Colonic mucosa (tissue), 4 donors: ENCODE measurements at regions of chr3 and their contacts with region 1.

Region 1: DNA sequence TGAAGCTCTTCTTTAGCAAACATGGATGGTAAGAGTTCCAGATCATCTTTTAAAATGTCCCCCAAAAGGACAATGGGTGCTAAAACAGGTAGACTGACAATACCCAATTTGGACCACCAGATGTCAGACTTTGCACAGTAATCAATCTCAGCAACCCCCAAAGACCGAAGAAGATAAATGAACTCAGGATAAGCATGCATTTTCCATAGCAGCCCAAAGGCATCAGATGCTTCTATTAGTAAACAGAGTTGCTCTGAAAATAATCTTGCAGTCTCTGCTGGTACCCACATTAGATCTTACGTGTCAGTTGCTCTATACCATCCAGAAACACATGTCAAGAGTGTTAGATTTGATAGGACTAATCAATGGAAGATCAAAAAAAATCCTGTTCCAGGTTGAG is 20.6 kb downstream of the MYH15 start:
- DNase-seq: peak; percentile 35
- H3K4me3 ChIP-seq: no peak overlapping the region
- H3K27ac ChIP-seq: no peak overlapping the region
- H3K4me1 ChIP-seq: no peaks in the 10 kb centered on the region
- H3K27me3 ChIP-seq: no peaks in the 10 kb centered on the region
- CTCF ChIP-seq: peak; percentile 56

Region 2: GRCh38 chr3:107938143-107938542 is 551.6 kb before region 1 on chr3:
- intact Hi-C with region 1: loop called (anchors 10 kb)
- DNase-seq: peak; percentile 32
- H3K4me3 ChIP-seq: no peak overlapping the region
- H3K27ac ChIP-seq: no peak overlapping the region
- H3K4me1 ChIP-seq: no peaks in the 10 kb centered on the region
- H3K27me3 ChIP-seq: no peaks in the 10 kb centered on the region
- CTCF ChIP-seq: peak; percentile 21

Region 3: DNA sequence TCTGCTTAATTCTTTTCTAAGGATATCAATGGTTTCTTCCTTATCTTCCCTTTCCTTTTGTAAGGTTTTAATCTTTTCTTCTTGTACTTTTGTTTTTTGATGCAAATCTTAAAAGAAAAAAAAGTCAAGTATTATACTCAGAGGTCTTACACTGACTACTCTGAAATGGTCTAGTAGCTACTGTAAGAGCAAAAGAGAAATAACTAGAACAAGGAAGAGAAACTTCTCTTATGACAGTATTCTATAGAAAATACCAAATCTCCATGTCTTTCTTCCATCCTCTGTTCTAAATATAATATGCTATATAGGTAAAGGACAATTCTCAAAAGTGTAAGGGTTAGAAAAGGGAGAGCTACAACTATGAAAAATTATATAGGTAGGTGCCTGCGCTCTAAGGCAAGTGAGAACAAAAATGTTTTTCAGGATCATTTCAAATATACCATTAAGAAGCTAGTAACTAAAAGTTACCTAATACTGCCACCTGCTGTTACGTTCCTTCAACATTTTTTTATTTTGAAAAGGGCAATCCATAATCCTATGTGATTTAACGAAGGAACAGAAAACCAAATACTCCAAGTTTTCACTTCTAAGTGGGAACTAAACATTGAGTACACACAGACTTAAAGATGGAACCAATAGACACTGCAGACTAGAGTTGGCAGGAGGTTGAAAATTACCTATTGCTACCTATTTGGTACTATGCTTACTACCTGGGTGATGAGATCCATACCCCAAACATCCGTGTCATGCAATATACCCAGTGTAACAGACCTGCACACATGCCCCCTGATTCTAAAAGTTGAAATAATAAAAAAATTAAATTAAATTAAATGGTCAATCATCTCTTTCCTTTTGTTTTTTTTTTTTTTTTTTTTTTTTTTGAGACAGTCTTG is 62.7 kb after region 1 on chr3:
- intact Hi-C with region 1: loop called (anchors 5 kb)
- DNase-seq: no peak
- H3K4me3 ChIP-seq: no peak overlapping the region
- H3K27ac ChIP-seq: no peak overlapping the region
- H3K4me1 ChIP-seq: peaks cover 5% of the 10 kb centered on the region
- H3K27me3 ChIP-seq: no peaks in the 10 kb centered on the region
- CTCF ChIP-seq: peak; percentile 13

Region 4: DNA sequence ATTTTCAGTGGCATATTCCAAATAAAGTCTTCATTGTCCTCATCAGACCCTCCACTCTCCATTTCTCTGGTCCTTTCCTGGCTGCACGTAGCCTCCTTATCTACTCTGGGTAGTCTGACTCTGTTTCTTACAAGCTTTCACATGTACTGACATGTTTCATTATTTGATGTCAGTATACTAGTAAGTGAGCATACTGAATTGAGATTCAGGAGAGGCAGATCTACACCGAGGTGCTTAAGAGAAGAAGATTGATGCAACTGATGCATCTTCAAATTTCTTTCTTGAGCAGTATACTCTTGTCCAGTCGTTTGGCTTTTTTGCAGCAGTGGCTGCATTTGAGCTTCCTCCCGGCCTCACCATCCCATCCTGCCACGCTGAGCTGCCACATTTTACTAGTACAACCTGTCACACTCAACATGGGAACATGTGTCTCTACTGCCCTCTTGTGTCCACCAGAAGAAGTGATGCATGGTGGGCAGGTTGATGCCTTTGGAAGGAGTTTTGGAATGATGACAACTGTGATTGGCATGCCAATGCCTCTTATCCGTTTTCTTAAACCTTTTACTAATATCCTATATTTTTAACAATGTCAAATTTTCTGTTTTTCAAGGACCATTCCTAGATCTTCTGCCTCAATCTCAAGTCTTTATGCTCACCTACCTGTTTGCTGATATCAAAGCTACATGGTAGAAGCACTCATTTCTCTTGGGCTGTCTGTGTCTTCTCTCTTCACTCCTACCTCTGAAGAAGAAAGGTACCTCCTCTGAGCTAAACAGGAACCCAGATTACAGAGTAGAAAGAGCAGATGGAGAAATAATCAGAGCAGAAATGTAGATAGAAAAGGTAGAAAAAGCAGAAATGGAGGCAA is 425.2 kb after region 1 on chr3:
- intact Hi-C with region 1: loop called (anchors 10 kb)
- DNase-seq: peak; percentile 48
- H3K4me3 ChIP-seq: no peak overlapping the region
- H3K27ac ChIP-seq: no peak overlapping the region
- H3K4me1 ChIP-seq: no peaks in the 10 kb centered on the region
- H3K27me3 ChIP-seq: no peaks in the 10 kb centered on the region
- CTCF ChIP-seq: peak; percentile 86